Ascending aorta (tissue), 2 donors: ENCODE measurements at regions of chr1 and their contacts with region 1.

Region 1: DNA sequence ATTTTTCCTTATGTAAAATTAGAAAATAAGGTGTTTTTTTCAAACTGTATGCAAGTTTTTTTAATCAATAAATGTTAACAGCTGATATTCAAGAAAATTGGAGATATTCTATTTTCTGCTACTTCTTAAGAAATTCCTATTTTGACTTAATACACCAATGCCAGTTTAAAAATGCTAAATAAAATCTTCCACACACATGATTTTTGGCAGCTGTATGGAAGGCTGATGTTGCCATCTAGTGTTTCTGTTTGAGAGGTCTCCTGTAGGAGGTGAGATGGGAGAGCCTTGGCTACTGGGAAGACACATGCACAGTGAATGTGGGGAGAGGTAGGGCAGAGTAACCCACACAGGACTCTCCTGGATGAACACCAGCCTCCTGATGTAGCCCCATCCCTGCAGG is 29.2 kb upstream of the OR2B11 start:
- DNase-seq: no peak
- H3K4me3 ChIP-seq: no peak overlapping the region
- H3K27ac ChIP-seq: no peak overlapping the region
- H3K4me1 ChIP-seq: no peaks in the 10 kb centered on the region
- H3K27me3 ChIP-seq: no peaks in the 10 kb centered on the region
- CTCF ChIP-seq: peak; percentile 31 to 50 (median 40)

Region 2: GRCh38 chr1:247373721-247374141 is 113.3 kb before region 1 on chr1:
- intact Hi-C with region 1: loop called (anchors 5 kb)
- DNase-seq: peak in 1 of 2 donors; percentile 67
- H3K4me3 ChIP-seq: peak overlapping the region; percentile 36 to 59
- H3K27ac ChIP-seq: no peak overlapping the region
- H3K4me1 ChIP-seq: no peaks in the 10 kb centered on the region
- H3K27me3 ChIP-seq: no peaks in the 10 kb centered on the region
- CTCF ChIP-seq: peak in 2 of 3 experiments; percentile 29 to 45

Region 3: DNA sequence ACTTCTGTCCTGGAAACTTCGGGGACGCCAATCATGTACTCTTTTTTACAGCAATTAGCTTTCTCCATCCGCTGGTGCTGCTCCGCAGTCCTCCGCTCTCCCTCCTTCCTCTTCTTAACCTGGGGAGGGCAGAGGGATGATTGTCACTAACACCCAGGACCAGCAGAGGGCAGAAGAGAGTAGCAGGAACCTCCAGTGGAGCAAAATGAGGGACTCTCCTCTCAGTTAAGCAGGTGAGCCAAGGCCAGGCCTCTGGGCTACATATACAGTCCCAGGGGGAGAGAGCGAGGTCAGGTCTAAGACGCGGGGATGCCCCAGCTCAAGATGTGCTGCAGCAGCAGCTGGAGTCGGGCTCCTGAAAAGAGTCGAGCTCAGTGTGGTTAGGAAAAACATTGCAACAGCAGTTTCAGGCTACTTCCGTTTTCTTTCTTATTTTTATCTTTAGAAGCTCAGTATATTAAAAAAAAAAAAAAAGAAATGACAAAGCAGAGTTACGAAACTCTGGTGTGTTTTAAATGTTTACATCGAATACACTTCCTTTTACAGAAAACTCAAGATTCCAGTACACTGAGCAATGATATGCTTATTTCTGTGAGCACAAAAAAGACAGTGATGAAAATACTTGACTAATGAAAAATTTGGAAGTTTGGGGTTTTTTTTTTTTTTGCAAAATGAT is 96.8 kb before region 1 on chr1:
- intact Hi-C with region 1: loop called (anchors 5 kb)
- DNase-seq: peak; percentile 51 to 90
- H3K4me3 ChIP-seq: peak overlapping the region; percentile 33 to 47
- H3K27ac ChIP-seq: peak overlapping the region in 1 of 2 donors; percentile 26
- H3K4me1 ChIP-seq: no peaks in the 10 kb centered on the region
- H3K27me3 ChIP-seq: no peaks in the 10 kb centered on the region
- CTCF ChIP-seq: peak; percentile 69 to 92 (median 86)

Region 4: GRCh38 chr1:247456914-247457639 is 30.0 kb before region 1 on chr1:
- intact Hi-C with region 1: no loop called
- DNase-seq: no peak
- H3K4me3 ChIP-seq: no peak overlapping the region
- H3K27ac ChIP-seq: no peak overlapping the region
- H3K4me1 ChIP-seq: no peaks in the 10 kb centered on the region
- H3K27me3 ChIP-seq: no peaks in the 10 kb centered on the region
- CTCF ChIP-seq: no peak